Caco-2 (cell line): ENCODE measurements at regions of chr3 and their contacts with region 1.

Region 1: DNA sequence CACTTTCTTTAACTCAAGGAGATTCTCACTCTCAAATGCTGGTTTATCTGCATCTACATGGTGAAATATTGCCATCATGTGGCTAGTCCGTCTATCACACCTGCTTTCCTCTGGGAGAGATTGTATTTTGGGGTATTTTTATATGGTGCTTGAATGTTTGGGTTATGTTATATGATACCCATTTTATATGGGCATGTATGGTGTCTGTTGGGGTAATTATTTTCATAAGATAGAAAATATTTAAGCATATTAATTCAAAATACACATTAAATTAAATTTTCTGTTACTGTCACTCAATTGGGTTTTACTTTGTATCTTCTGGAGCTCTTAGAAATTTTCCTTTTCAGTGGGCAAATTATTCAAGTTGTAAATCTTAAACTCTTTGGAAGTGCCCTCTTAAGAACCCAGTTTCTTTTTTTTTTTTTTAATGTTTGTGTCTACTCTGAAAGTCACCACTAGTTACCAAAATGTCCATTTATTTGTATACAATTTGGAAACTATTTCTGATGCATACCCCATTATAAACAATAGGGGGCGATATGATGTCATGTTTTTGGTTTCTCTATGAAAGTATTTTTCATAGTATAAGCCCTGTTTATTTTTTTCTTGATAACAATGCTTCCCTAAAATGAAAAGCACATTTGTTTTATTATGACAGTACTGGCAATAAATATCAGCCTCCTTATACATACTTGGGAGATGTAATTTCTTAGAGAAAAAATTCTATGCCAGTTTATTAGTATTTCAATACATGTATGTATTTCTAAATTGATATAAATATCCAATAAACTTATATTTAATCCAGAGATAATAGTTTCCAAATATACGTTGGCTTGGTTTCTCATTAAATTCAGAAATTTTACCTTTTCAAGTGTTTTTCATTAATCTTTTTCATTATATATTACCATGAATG is 36.1 kb upstream of the PLSCR5 start:
- DNase-seq: peak in 1 of 2 experiments; percentile 34
- H3K4me3 ChIP-seq: no peak overlapping the region
- H3K4me3 Mint-ChIP-seq: no peak overlapping the region
- H3K27ac Mint-ChIP-seq: no peak overlapping the region
- H3K4me1 ChIP-seq: peaks cover 6% of the 10 kb centered on the region
- H3K4me1 Mint-ChIP-seq: no peaks in the 10 kb centered on the region
- H3K27me3 ChIP-seq: no peaks in the 10 kb centered on the region
- H3K27me3 Mint-ChIP-seq: no peaks in the 10 kb centered on the region
- CTCF ChIP-seq: peak; percentile 33 to 54

Region 2: GRCh38 chr3:146334151-146334550 is 307.1 kb before region 1 on chr3:
- CTCF ChIA-PET with region 1: no interaction called
- POLR2A ChIA-PET with region 1: no interaction called
- intact Hi-C with region 1: loop called (anchors 1 kb)
- DNase-seq: peak in 1 of 2 experiments; percentile 30
- H3K4me3 ChIP-seq: no peak overlapping the region
- H3K4me3 Mint-ChIP-seq: no peak overlapping the region
- H3K27ac Mint-ChIP-seq: no peak overlapping the region
- H3K4me1 ChIP-seq: no peaks in the 10 kb centered on the region
- H3K4me1 Mint-ChIP-seq: no peaks in the 10 kb centered on the region
- H3K27me3 ChIP-seq: no peaks in the 10 kb centered on the region
- H3K27me3 Mint-ChIP-seq: no peaks in the 10 kb centered on the region
- CTCF ChIP-seq: peak; percentile 9 to 21

Region 3: DNA sequence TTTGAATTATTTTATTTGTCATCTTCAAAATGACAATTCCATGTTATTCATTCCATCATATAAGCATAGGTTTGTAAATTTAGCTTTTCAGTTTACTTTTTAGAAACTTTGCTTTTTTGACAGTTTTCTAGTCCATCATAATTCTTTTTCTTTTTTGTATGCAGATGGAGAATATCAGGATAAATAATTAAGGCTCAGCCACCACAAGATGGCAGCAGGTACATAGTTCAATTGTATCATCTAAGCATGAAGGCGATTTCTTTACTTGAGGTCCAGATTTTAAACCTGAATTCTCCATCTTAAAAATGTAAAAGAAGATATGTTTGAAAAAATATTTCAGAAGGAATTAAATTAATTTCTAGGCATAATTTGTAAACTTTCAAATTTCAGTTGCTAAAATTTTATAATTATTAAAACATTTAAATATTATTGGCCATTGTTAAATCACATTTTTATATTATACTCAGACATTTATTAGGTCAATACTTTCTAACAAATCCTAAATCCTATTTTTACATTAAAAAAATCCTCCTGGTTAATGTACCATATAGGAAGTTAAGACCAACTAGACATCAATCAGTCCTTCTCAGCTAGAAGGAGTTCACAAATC is 51.2 kb before region 1 on chr3:
- CTCF ChIA-PET with region 1: interaction called, 3 read pairs
- POLR2A ChIA-PET with region 1: no interaction called
- intact Hi-C with region 1: loop called (anchors 1 kb)
- DNase-seq: peak in 1 of 2 experiments; percentile 39
- H3K4me3 ChIP-seq: no peak overlapping the region
- H3K4me3 Mint-ChIP-seq: no peak overlapping the region
- H3K27ac Mint-ChIP-seq: no peak overlapping the region
- H3K4me1 ChIP-seq: 0 out of 2 replicates have a peak, but pooled peaks cover 2% of the 10 kb centered on the region
- H3K4me1 Mint-ChIP-seq: no peaks in the 10 kb centered on the region
- H3K27me3 ChIP-seq: no peaks in the 10 kb centered on the region
- H3K27me3 Mint-ChIP-seq: no peaks in the 10 kb centered on the region
- CTCF ChIP-seq: peak; percentile 34 to 45

Region 4: DNA sequence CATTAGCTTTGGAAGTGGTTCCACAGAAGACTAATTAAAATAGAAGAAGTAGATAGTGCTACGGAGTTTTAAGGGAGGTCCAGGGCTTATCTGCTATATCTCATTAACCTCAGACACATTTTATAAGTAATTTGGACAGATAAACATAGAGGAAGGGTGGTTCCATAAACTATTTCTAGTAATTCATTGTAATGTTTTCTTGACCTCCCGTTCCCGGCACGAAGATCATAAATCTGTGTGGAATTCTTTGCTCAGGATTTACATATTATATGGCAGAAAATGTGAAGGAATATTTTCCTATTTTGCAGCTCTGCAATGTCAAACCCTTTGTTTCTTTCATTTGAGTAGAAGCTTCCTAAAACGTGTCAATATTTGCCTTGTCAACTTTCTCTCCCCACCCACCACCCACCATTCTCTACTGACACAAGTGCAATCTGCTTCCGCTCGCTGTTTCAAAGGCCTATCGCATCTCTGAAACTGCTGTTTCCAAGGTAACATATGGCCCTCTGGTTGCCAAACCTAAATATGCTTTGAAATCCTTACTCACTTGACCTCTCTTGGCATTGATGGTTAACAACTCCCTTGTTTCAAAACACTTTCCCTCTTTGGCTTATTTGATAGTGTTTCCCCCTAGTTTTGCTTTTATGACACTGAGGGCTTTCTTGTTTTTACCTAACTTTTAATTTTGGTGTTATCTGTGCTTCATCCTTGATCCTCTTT is 14.6 kb before region 1 on chr3:
- CTCF ChIA-PET with region 1: no interaction called
- POLR2A ChIA-PET with region 1: no interaction called
- intact Hi-C with region 1: loop called (anchors 1 kb)
- DNase-seq: peak; percentile 54 to 65
- H3K4me3 ChIP-seq: no peak overlapping the region
- H3K4me3 Mint-ChIP-seq: no peak overlapping the region
- H3K27ac Mint-ChIP-seq: no peak overlapping the region
- H3K4me1 ChIP-seq: no peaks in the 10 kb centered on the region
- H3K4me1 Mint-ChIP-seq: peaks cover 6% of the 10 kb centered on the region
- H3K27me3 ChIP-seq: no peaks in the 10 kb centered on the region
- H3K27me3 Mint-ChIP-seq: peaks cover 5% of the 10 kb centered on the region
- CTCF ChIP-seq: no peak

Region 5: GRCh38 chr3:146701246-146701645 is 60.0 kb after region 1 on chr3:
- CTCF ChIA-PET with region 1: no interaction called
- POLR2A ChIA-PET with region 1: no interaction called
- intact Hi-C with region 1: no loop called
- DNase-seq: no peak
- H3K4me3 ChIP-seq: no peak overlapping the region
- H3K4me3 Mint-ChIP-seq: no peak overlapping the region
- H3K27ac Mint-ChIP-seq: no peak overlapping the region
- H3K4me1 ChIP-seq: no peaks in the 10 kb centered on the region
- H3K4me1 Mint-ChIP-seq: no peaks in the 10 kb centered on the region
- H3K27me3 ChIP-seq: no peaks in the 10 kb centered on the region
- H3K27me3 Mint-ChIP-seq: no peaks in the 10 kb centered on the region
- CTCF ChIP-seq: no peak